Vagina (tissue), 2 donors: ENCODE measurements at regions of chr15 and their contacts with region 1.

Region 1: DNA sequence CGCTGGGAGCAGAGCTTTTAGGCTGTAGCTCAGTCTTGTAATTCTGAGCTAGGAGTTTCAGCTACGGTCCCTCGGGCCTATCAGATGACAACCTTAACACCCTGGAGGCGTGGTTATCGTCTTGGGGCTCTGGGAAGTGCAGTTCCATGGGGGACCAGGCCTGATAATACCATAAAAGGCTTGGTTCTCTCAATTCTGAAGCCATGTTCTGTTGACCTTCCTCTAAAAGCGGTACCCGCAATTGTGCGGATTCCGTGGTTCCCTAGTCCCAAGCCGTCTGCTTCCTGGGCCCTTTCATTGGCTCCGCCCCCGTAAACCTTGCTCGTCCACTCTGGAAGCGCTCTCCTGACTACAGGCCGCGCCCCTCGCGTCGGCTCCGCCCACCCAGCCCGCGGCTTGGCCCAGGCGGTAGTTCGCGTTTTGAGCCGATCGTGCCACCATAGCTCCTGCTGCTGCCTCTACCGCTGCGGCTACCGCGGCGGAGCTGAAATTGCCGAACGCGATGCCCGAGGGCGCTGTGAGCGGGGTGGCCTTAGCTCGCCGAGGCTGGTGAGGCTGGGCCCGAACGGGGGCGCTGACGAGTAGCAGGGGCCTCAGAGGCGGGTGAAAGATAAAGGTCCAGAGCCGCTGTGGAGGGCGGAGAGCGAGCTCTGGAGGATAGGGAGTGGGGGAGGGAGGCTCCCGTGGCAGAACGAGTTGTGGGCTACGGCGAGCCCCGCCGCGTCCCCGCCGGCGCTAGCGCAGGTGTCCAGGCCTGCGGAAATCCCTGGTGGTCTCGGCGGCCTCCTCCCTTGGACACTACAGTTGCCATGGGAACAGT is at the start of gene MAPKBP1:
- DNase-seq: peak in 1 of 2 donors; percentile 97
- H3K4me3 ChIP-seq: peak within 1 kb of the TSS; percentile 54 to 76
- H3K27ac ChIP-seq: peak within 1 kb of the TSS; percentile 87
- H3K4me1 ChIP-seq: peaks cover 55% of the 10 kb centered on the region
- H3K27me3 ChIP-seq: no peaks in the 10 kb centered on the region
- CTCF ChIP-seq: peak in 2 of 3 experiments; percentile 17 to 40
- POLR2A ChIP-seq: peak in 1 of 2 donors; percentile 52
- total RNA-seq, gene MAPKBP1: 35.8 TPM

Region 2: DNA sequence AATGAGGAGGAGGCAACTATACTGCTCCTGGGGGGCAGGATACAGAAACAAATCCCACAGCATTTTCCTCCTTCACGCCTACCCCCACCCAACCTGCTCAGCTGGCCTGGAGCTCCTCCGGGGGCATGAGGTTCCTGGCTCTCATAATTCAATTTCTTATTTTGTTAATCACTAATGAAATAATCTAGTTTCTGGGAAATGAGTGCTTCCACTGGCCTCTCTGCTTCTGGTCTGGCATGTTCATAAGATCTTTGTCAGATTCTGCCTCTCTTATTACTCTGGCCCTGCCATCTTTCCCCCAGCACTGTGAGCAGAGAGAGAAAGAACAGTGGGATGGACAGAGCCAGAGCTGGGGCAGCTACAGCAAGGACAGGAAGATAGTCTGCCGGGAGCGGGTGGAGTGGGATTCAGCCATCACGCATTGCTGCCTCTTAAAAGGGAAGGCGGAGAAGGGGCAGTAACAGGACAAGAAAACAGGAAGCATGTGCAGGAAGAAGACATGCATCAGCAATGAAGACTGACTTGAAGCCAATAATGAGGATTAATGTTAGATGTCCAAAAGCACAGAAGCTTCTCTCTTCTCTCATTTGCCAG is 243.8 kb before region 1 on chr15:
- intact Hi-C with region 1: no loop called
- DNase-seq: no peak
- H3K4me3 ChIP-seq: no peak overlapping the region
- H3K27ac ChIP-seq: no peak overlapping the region
- H3K4me1 ChIP-seq: no peaks in the 10 kb centered on the region
- H3K27me3 ChIP-seq: no peaks in the 10 kb centered on the region
- CTCF ChIP-seq: no peak
- POLR2A ChIP-seq: no peak

Region 3: GRCh38 chr15:41811432-41812195 is 37.3 kb after region 1 on chr15:
- intact Hi-C with region 1: loop called (anchors 5 kb)
- DNase-seq: no peak
- H3K4me3 ChIP-seq: no peak overlapping the region
- H3K27ac ChIP-seq: no peak overlapping the region
- H3K4me1 ChIP-seq: peaks cover 9% of the 10 kb centered on the region
- H3K27me3 ChIP-seq: no peaks in the 10 kb centered on the region
- CTCF ChIP-seq: peak; percentile 74 to 91 (median 82)
- POLR2A ChIP-seq: no peak

Region 4: DNA sequence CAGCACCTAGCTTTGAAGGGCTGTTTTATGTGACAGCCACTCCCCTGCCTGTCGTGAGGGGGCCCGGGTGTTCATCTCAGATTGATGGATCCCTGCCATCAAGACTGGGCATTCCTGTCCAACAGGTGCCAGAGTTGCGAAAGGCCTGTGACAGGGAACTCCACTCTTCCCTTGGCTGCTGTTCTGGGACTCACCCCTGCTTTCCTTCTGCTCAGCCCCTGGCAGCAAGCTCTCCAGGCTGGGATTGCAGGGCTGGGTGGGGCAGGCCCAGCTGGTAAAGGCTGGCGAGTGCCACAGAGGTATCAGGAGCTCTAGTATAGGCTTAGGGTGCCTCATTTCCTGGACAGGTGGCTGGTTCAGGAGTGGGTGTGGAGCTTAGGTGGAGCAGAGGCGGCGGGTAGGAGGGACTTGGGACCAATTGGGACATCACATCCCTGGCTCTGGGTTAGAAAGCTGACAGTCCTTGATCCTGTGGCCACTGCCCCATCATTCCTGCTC is 64.2 kb after region 1 on chr15 and contains the start of gene PLA2G4B:
- intact Hi-C with region 1: no loop called
- DNase-seq: no peak
- H3K4me3 ChIP-seq: peak within 1 kb of the TSS in 1 of 2 donors; percentile 25
- H3K27ac ChIP-seq: peak within 1 kb of the TSS; percentile 59
- H3K4me1 ChIP-seq: peaks cover 35% of the 10 kb centered on the region
- H3K27me3 ChIP-seq: no peaks in the 10 kb centered on the region
- CTCF ChIP-seq: no peak
- POLR2A ChIP-seq: no peak
- total RNA-seq, gene PLA2G4B: 34.1 TPM

Region 5: GRCh38 chr15:41881920-41882688 is 107.8 kb after region 1 on chr15:
- intact Hi-C with region 1: no loop called
- DNase-seq: no peak
- H3K4me3 ChIP-seq: peak overlapping the region; percentile 31 to 39
- H3K27ac ChIP-seq: no peak overlapping the region
- H3K4me1 ChIP-seq: peaks cover 30% of the 10 kb centered on the region
- H3K27me3 ChIP-seq: no peaks in the 10 kb centered on the region
- CTCF ChIP-seq: no peak
- POLR2A ChIP-seq: no peak

Region 6: GRCh38 chr15:42107473-42107872 is 333.2 kb after region 1 on chr15:
- intact Hi-C with region 1: no loop called
- DNase-seq: no peak
- H3K4me3 ChIP-seq: no peak overlapping the region
- H3K27ac ChIP-seq: no peak overlapping the region
- H3K4me1 ChIP-seq: no peaks in the 10 kb centered on the region
- H3K27me3 ChIP-seq: no peaks in the 10 kb centered on the region
- CTCF ChIP-seq: no peak
- POLR2A ChIP-seq: no peak